ENCODE measurements at regions of chr14 and their contacts with region 1.

Region 1: GRCh38 chr14:24013654-24014514 is 25.2 kb downstream of the DHRS4L2 start:
- DNase-seq: peak; percentile 52 to 77
- H3K4me3 ChIP-seq: no peak overlapping the region
- H3K4me3 Mint-ChIP-seq: no peak overlapping the region
- H3K27ac Mint-ChIP-seq: no peak overlapping the region
- H3K4me1 ChIP-seq: no peaks in the 10 kb centered on the region
- H3K4me1 Mint-ChIP-seq: no peaks in the 10 kb centered on the region
- H3K27me3 ChIP-seq: no peaks in the 10 kb centered on the region
- H3K27me3 Mint-ChIP-seq: peaks cover 5% of the 10 kb centered on the region
- CTCF ChIP-seq: peak; percentile 66 to 83

Region 2: GRCh38 chr14:24036169-24036962 is 22.5 kb after region 1 on chr14:
- CTCF ChIA-PET with region 1: no interaction called
- POLR2A ChIA-PET with region 1: no interaction called
- intact Hi-C with region 1: loop called (anchors 1 kb)
- DNase-seq: peak; percentile 82 to 83
- H3K4me3 ChIP-seq: peak overlapping the region; percentile 66
- H3K4me3 Mint-ChIP-seq: peak overlapping the region; percentile 95
- H3K27ac Mint-ChIP-seq: peak overlapping the region; percentile 90
- H3K4me1 ChIP-seq: no peaks in the 10 kb centered on the region
- H3K4me1 Mint-ChIP-seq: no peaks in the 10 kb centered on the region
- H3K27me3 ChIP-seq: no peaks in the 10 kb centered on the region
- H3K27me3 Mint-ChIP-seq: peaks cover 2% of the 10 kb centered on the region
- CTCF ChIP-seq: peak; percentile 74 to 91

Region 3: DNA sequence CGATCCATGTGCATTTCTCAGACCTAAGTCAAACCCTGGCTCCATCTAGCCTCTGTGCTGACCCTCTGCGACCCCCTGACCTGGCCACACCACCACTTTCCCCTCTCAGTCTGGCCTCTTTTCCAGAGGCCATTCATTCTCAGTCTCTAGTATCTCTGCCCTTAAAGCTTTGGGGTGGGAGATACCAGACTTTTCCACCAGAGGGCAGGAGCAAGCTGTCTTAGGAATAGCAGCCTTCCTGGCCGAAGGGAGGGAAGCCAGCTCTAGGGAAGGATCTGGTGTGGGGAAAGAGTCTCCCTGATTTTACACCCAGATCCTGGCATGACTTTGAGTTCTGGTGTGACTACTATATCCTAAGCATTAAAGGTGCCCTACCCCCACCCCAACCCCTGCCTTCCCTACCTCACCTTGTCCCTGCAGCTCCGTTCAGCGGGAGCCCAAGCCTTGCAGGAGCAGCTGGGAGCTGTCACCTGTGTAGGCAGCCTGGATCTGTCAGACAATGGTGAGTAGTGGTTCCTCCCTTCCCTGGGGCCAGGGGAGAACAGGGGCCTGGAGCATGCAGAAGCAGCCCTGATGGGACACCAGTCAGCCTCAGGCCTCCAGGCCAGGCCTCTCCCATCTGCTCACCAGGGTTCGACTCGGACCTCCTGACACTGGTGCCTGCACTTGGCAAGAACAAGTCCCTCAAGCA is 44.5 kb after region 1 on chr14:
- CTCF ChIA-PET with region 1: no interaction called
- POLR2A ChIA-PET with region 1: no interaction called
- intact Hi-C with region 1: loop called (anchors 2 kb)
- DNase-seq: peak; percentile 70 to 81
- H3K4me3 ChIP-seq: no peak overlapping the region
- H3K4me3 Mint-ChIP-seq: no peak overlapping the region
- H3K27ac Mint-ChIP-seq: no peak overlapping the region
- H3K4me1 ChIP-seq: no peaks in the 10 kb centered on the region; the same call in 1 of the 2 replicates
- H3K4me1 Mint-ChIP-seq: no peaks in the 10 kb centered on the region
- H3K27me3 ChIP-seq: no peaks in the 10 kb centered on the region
- H3K27me3 Mint-ChIP-seq: peaks cover 3% of the 10 kb centered on the region
- CTCF ChIP-seq: peak; percentile 66 to 85

Region 4: DNA sequence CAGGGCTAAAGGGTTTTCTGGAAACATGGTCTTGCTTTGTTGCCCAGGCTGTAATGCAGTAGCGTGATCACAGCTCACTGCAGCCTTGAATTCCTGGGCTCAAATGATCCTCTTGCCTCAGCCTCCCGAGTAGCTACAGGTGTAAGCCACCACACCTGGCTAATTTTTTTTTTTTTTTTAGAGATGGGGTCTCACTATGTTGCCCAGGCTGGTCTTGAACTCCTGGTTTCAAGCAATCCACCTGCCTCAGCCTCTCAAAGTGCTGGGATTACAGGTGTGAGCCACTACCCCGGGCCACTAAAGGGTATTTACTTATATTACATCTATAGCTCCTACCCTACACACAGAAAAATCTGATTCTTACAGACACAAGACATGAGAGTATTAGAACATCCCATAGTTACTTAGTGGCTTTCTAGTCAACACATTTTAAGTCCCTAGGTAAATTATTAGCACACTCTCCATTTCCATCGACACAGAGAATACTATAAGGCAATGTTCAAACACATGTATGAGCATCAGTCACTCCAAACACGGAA is 94.5 kb after region 1 on chr14:
- CTCF ChIA-PET with region 1: no interaction called
- POLR2A ChIA-PET with region 1: no interaction called
- intact Hi-C with region 1: loop called (anchors 1 kb)
- DNase-seq: no peak
- H3K4me3 ChIP-seq: no peak overlapping the region
- H3K4me3 Mint-ChIP-seq: no peak overlapping the region
- H3K27ac Mint-ChIP-seq: no peak overlapping the region
- H3K4me1 ChIP-seq: peaks cover 8% of the 10 kb centered on the region; the same call in 1 of the 2 replicates
- H3K4me1 Mint-ChIP-seq: no peaks in the 10 kb centered on the region
- H3K27me3 ChIP-seq: no peaks in the 10 kb centered on the region
- H3K27me3 Mint-ChIP-seq: no peaks in the 10 kb centered on the region
- CTCF ChIP-seq: no peak